ENCODE measurements at regions of chrX and their contacts with region 1.

Region 1: GRCh38 chrX:76253432-76253831 is 80.6 kb downstream of the PBDC1 start:
- DNase-seq: peak; percentile 56
- ATAC-seq: peak; percentile 87
- H3K4me3 ChIP-seq: no peak overlapping the region
- H3K27ac ChIP-seq: no peak overlapping the region
- H3K4me1 ChIP-seq: no peaks in the 10 kb centered on the region
- H3K27me3 ChIP-seq: no peaks in the 10 kb centered on the region
- CTCF ChIP-seq: peak; percentile 65
- POLR2A ChIP-seq: no peak
- RAD21 ChIP-seq: peak; percentile 79

Region 2: DNA sequence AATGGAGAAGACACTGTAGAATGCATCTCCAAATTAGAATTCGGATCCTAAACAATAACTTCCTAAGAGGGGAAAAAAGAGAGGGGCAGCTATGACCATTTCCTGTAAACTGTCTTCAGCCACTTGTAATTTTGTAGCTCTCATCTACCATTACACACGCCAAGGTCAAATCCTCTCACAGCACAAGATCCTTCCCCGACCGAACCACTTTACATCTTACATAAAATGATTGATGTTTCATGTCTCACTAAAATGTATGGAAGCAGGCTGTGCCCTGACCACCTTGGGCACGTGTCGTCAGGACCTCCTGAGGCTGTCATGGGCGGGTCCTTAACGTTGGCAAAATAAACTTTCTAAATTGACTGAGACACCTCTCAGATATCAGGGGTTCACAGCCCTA is 104.7 kb before region 1 on chrX:
- CTCF ChIA-PET with region 1: interaction called, 10 read pairs
- POLR2A ChIA-PET with region 1: no interaction called
- dilution Hi-C with region 1: no loop called
- in situ Hi-C with region 1: no loop called
- intact Hi-C with region 1: loop called (anchors 5 kb)
- DNase-seq: peak; percentile 33
- ATAC-seq: no peak
- H3K4me3 ChIP-seq: peak overlapping the region; percentile 18; the same call in 1 of the 2 replicates
- H3K27ac ChIP-seq: peak overlapping the region; percentile 95
- H3K4me1 ChIP-seq: peaks cover 2% of the 10 kb centered on the region
- H3K27me3 ChIP-seq: no peaks in the 10 kb centered on the region
- CTCF ChIP-seq: no peak
- POLR2A ChIP-seq: no peak
- RAD21 ChIP-seq: no peak

Region 3: DNA sequence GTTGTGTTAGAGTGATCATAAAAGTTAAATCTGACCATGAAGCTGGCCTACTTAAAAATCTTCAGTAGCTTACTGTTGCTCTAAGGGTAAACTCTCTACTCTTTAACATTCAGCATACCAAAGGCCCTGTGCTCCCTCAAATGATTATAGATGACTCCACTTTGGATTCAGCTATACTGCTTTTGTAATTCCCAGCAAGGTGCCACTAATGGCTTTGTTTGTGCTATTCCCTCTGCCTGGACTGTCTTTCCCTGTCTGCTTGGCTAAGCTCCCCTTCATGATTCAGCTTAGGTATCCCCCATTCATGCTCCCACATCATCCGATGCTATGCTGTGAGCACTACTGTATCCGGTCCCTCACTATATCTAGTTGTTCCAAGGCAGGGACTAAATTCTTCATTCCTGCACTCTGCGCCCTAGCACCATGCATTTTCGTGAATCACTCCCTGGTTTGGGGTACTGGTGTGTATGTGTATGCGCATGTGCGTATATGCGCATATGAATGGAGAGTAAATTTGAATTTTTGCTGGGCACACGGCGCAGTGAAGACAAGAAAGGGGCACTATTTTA is 81.0 kb before region 1 on chrX:
- CTCF ChIA-PET with region 1: no interaction called
- POLR2A ChIA-PET with region 1: no interaction called
- dilution Hi-C with region 1: no loop called
- in situ Hi-C with region 1: no loop called
- intact Hi-C with region 1: loop called (anchors 1 kb)
- DNase-seq: no peak
- ATAC-seq: peak; percentile 78
- H3K4me3 ChIP-seq: peak overlapping the region; percentile 50
- H3K27ac ChIP-seq: peak overlapping the region; percentile 88
- H3K4me1 ChIP-seq: no peaks in the 10 kb centered on the region
- H3K27me3 ChIP-seq: no peaks in the 10 kb centered on the region; the same call in 1 of the 2 replicates
- CTCF ChIP-seq: no peak
- POLR2A ChIP-seq: no peak
- RAD21 ChIP-seq: no peak

Measured in IMR-90 (cell line).